Activated naive CD4-positive, alpha-beta T cell treated with anti-CD3 and anti-CD28 coated beads for 36 hours (primary cell): ENCODE measurements at regions of chr2 and their contacts with region 1.

Region 1: DNA sequence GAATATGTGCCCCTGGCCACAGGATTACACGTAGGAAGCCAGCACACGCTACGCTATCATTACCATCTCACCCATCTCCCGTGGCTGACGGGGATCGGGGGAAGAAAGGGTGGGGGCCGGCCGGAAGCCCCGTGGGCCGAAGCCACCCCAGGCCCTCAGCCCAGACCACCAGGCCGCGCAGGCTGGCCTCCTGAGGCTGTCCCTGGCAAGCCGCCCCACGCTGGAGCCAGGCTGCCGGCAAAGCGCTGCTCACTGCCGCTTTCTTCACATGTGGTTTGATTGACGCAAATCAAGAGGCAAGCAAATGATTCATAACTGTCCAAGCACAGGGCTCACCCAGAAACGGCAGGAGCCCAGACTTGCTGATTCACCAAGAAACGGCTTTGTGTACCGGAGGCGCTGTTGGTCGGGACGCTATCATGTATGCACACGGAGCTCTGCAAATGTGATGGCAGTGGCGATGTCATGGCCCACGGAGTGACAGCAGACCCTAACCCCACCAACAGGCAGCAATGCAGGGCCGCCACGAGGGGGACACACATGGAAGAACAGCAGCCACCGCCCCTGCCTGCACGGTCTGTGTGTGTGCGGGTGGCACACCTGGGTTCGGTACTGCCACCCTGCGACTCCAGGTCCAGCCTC is 125.7 kb downstream of the HDAC4 start:
- DNase-seq: peak; percentile 93
- H3K4me3 Mint-ChIP-seq: peak overlapping the region; percentile 51
- H3K27ac Mint-ChIP-seq: peak overlapping the region; percentile 77
- H3K4me1 Mint-ChIP-seq: peaks cover 51% of the 10 kb centered on the region
- H3K27me3 Mint-ChIP-seq: peaks cover 24% of the 10 kb centered on the region

Region 2: DNA sequence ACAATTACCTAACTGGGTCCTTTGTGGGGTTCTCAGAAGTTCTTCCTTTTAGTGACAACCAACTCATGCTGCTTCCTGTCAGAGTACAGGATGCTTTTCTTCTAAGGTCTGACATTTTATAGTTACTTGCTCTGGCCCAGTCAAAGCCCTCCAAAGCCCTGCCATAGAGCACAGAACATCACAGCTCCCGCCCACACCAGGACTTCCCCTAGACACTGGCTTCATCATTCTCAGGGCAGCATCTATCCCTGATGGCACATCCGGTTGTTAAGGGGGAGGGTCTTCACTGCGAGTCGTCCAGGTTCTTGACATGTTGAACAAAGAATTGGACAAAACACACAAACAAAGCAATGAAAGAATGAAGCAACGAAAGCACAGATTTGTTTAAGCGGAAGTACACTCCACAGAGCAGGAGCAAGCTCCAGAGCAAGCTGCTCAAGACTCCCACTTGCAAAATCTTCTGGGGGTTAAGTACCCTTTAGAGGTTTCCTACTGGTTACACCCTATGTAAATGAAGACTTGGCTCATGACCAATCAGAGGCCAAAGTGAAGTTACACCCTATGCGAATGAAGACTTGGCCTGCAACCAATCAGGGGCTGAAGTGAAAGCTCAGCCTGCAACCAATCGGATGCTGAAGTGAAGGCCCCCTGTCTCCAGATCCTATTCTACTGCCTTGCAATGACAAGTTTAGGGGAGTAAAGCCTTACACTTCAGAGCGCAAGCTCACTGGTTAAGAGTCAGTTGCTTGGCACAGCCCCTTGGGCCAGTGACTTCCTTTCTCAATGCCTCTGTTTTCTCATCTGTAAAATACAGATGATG is 46.6 kb after region 1 on chr2:
- CTCF ChIA-PET with region 1: no interaction called
- intact Hi-C with region 1: loop called (anchors 1 kb)
- DNase-seq: peak; percentile 94
- H3K4me3 Mint-ChIP-seq: peak overlapping the region; percentile 55
- H3K27ac Mint-ChIP-seq: peak overlapping the region; percentile 93
- H3K4me1 Mint-ChIP-seq: peaks cover 77% of the 10 kb centered on the region
- H3K27me3 Mint-ChIP-seq: no peaks in the 10 kb centered on the region

Region 3: DNA sequence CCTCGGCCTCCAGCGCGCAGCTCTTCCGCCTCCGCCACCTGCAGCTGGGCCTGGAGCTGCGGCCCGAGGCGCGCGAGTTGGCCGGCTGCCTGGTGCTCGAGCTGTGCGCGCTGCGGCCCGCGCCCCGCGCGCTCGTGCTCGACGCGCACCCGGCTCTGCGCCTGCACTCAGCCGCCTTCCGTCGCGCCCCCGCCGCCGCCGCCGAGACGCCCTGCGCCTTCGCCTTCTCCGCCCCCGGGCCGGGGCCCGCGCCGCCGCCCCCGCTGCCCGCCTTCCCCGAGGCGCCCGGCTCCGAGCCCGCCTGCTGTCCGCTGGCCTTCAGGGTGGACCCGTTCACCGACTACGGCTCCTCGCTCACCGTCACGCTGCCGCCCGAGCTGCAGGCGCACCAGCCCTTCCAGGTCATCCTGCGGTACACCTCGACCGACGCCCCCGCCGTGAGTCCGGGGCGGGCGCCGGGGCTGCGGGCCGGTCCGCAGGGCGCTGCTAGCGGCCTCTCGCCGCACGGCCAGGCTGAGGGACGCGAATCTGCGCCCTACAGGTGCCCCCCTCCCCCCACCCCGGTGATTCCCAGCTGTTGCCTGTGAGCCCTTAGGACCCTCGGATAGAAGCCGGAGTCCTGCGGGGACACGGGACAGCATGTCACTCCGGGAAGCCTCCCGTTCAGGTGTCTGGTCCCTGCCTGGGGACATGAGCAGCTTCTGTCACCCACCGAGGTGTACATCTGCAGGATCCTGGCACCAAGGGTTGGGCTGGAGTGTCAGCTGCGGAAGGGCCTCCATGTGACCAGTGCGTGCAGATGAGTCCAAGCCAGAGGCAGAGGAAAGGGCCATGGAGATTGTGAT is 1293.7 kb after region 1 on chr2:
- CTCF ChIA-PET with region 1: no interaction called
- intact Hi-C with region 1: no loop called
- DNase-seq: peak; percentile 39
- H3K4me3 Mint-ChIP-seq: peak overlapping the region; percentile 79
- H3K27ac Mint-ChIP-seq: peak overlapping the region; percentile 81
- H3K4me1 Mint-ChIP-seq: peaks cover 43% of the 10 kb centered on the region
- H3K27me3 Mint-ChIP-seq: no peaks in the 10 kb centered on the region